Lower leg skin (tissue), 4 donors: ENCODE measurements at regions of chr9 and their contacts with region 1.

Region 1: DNA sequence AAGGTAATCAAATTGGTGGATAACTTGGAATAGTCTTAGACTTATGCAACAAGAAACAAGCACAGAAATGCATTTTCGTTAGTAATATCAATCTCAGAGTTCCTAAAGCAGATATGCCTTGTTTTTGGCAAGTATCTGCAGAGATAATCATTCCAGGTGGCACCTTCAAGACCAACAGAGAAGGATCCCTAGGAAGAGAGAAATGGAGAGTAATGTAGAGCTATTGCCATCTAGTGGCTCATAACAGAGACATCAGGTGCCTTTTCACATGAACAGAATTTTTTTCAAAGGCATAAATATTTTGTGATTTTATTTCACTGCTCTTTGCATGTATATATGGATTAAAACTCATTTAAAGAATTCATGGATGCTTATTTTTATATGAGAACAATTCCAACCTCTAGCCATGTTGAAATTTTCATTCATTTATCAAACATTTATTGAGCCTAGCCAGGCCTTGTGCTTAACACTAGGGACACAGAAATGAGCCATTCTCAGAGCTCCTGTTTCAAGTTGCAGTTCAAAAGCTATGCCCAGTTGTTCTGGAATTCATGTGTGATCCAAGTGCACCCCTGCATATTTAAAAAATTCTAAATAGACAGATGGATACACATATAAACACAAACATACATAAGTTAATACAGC is 117.5 kb upstream of the OR13F1 start:
- DNase-seq: no peak
- H3K4me3 ChIP-seq: no peak overlapping the region
- CTCF ChIP-seq: no peak
- POLR2A ChIP-seq: no peak

Region 2: DNA sequence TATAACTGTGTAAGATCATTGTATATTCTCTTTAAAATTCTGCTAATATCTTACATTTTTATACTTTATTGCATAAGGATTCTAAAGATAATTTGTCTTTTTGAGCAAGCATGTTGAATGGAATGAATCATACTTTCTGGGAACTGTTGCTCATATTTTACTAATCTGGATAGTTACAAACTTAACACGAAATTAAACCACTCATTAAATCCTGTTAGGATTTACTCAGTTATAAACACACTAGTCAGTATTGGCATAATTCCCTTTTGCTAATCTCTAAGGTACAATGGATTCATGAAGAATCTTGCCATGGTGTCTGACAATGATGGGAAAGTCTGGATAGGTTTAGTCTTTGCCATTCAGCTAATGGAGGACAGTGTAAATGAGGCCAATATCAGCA is 630.6 kb before region 1 on chr9:
- intact Hi-C with region 1: loop called (anchors 5 kb)
- DNase-seq: no peak
- H3K4me3 ChIP-seq: no peak overlapping the region
- CTCF ChIP-seq: no peak
- POLR2A ChIP-seq: no peak